ENCODE measurements at regions of chr9 and their contacts with region 1.

Region 1: GRCh38 chr9:136926137-136926704 is 18.3 kb downstream of the FBXW5 start:
- DNase-seq: no peak
- ATAC-seq: peak; percentile 66 to 83
- H3K4me3 ChIP-seq: no peak overlapping the region
- H3K27ac ChIP-seq: peak overlapping the region in 1 of 2 experiments; percentile 54; a peak in 2 of 6 replicates
- H3K4me1 ChIP-seq: peaks cover 6% of the 10 kb centered on the region; the same call in 1 of the 3 replicates
- CTCF ChIP-seq: 0 out of 3 replicates have a peak, but pooled peaks have one; percentile 12
- EP300 ChIP-seq: no peak
- POLR2A ChIP-seq: no peak
- RAD21 ChIP-seq: 0 out of 5 replicates have a peak, but pooled peaks of 1 of the 2 experiments have one; percentile 14

Region 2: GRCh38 chr9:136790927-136791641 is 135.1 kb before region 1 on chr9 and contains the start of gene TMEM141:
- CTCF ChIA-PET with region 1: no interaction called
- POLR2A ChIA-PET with region 1: no interaction called
- DNase-seq: peak; percentile 90 to 100
- ATAC-seq: peak; percentile 85 to 90
- H3K4me3 ChIP-seq: peak within 1 kb of the TSS; percentile 88
- H3K27ac ChIP-seq: peak within 1 kb of the TSS; percentile 91 to 94
- H3K4me1 ChIP-seq: peaks cover 45% of the 10 kb centered on the region
- CTCF ChIP-seq: no peak
- EP300 ChIP-seq: no peak
- POLR2A ChIP-seq: peak; percentile 75
- RAD21 ChIP-seq: no peak
- polyA plus RNA-seq, gene TMEM141: 64.5 and 78.0 TPM in 2 replicates

Region 3: GRCh38 chr9:136858844-136859757 is 67.1 kb before region 1 on chr9:
- CTCF ChIA-PET with region 1: interaction called, 10 read pairs
- POLR2A ChIA-PET with region 1: no interaction called
- DNase-seq: peak in 1 of 2 experiments; percentile 50
- ATAC-seq: peak; percentile 27 to 64
- H3K4me3 ChIP-seq: no peak overlapping the region
- H3K27ac ChIP-seq: peak overlapping the region; percentile 79 to 89
- H3K4me1 ChIP-seq: peaks cover 73% of the 10 kb centered on the region
- CTCF ChIP-seq: no peak
- EP300 ChIP-seq: no peak
- POLR2A ChIP-seq: 0 out of 2 replicates have a peak, but pooled peaks have one; percentile 2
- RAD21 ChIP-seq: no peak

Region 4: DNA sequence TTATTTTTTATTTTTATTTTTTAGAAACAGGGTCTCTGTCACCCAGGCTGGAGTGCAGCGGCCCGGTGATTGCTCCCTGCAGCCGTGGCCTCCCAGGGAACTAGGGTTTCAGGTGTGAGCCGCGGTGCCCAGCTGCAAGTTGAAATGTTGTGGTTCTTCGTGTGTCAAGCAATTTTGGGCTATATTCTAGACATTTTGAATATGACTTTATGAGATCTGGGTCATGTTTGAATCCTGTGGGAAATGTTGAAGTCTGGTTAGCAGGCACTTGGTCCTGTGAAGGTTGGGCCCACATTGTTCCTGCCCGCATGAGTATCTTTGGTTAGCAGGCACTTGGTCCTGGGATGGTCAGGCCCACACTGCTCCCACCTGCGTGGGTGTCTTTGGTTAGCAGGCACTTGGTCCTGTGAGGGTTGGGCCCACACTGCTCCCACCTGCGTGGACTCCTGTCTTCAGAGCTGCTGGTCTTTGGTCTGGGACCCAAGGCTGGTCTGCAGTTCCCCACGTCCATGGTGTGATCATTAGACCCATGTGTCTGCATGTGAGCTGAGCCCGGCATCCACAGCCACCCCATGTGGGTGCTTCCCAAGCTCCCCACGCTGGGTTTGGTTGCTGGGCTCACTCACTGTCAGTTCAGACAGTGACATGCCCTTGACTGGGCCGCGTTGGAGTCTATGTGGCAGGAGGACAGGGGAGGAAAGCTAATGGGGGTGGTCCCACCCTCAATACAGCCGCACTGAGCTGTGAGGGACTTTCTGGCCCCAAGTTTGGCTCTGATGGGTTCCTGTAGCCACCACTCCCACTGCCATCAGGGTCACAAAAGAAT is 11.2 kb after region 1 on chr9:
- CTCF ChIA-PET with region 1: interaction called, 10 read pairs
- POLR2A ChIA-PET with region 1: no interaction called
- DNase-seq: no peak
- ATAC-seq: no peak; a peak in 1 of 6 replicates
- H3K4me3 ChIP-seq: no peak overlapping the region
- H3K27ac ChIP-seq: peak overlapping the region in 1 of 2 experiments; percentile 18; a peak in 2 of 6 replicates
- H3K4me1 ChIP-seq: peaks cover 13% of the 10 kb centered on the region
- CTCF ChIP-seq: no peak
- EP300 ChIP-seq: no peak
- POLR2A ChIP-seq: no peak
- RAD21 ChIP-seq: no peak